HEK293T (cell line): ENCODE measurements at regions of chr16 and their contacts with region 1.

Region 1: GRCh38 chr16:71412270-71413160 is 29.3 kb downstream of the TLE7 start:
- DNase-seq: peak; percentile 84

Region 2: DNA sequence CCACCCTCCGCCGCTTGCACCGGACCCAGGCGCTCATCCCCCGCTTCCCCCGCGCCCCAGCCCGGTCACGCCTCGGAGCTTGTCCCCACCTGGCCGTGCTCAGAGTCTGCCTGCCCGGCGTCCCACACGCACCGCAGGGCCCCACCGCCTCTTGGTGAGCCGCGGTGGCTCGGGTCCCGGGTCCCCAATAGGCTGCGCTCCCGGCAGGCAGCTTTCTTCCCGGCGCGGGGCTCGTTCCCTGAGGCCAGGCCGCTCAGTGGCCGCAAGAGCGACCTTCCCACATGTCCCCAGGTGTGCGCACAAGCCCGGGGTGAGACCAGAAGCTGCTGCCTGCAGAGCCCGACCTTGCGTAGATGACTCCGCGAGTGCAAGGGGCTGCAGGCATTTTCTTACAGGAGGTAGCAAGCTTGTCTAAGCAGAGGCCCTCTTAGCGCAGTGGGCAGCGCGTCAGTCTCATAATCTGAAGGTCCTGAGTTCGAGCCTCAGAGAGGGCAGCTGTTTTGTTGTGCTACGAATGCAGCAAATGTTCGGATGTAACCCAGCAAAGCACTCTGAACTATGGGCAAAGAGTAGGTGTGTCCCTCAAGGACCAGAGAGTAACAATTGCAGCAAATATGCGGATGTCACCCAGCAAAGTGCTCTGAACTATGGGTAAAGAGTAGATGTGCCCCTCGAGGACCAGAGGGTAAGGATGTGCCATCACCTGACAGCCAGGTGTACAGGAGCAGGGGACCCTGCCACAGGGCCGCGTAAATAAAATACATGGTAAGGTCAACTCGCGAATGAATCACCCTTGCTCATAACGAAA is 13.8 kb after region 1 on chr16:
- CTCF ChIA-PET with region 1: interaction called, 13 read pairs
- POLR2A ChIA-PET with region 1: interaction called, 3 read pairs
- DNase-seq: peak; percentile 78

Region 3: DNA sequence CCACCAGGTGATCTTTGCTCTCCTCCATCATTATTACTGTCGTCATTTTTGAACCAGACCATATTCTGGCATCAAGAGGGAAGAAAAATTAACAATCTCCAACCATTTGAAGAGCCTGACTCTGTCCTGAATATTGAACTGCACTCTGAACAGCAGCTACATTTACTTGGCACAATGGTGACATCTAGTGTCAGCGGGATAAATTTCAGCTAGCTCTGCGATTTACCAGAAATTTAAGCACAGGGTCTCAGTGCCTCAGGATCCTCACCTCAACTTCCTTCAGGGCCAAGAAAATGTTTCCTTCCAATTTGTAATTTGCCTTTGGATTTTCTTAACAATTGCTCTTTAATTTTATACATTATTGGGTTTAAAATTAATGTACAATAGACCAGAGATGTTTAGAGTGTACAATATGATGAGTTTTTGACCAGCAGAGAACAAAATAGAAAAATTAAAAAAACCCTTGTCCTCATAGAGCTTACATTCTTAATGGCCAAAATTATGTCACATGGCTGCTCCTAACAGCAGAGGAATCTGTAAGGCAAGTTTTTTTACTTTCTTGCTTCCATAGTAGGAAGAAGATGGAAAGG is 87.4 kb after region 1 on chr16:
- CTCF ChIA-PET with region 1: interaction called, 15 read pairs
- POLR2A ChIA-PET with region 1: no interaction called
- DNase-seq: peak; percentile 70

Region 4: DNA sequence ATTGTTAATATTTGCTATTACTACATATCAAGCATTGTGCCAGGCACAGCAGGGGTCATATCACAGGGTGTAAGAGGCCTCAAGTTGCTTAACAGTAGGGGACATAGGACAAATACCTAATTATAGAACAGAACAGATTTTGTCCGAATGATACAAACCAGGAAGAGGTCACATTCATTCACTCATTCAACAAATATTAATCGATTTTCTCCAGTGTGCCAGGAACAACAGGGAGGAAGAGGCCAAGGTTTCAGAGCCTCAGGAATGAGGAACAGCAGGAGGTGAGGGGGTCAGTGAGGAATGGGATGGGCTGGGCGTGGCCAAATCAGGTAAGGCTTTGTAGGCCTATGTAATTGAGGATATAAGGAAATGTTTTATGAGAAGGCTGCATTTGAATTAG is 102.5 kb after region 1 on chr16:
- CTCF ChIA-PET with region 1: no interaction called
- POLR2A ChIA-PET with region 1: no interaction called
- DNase-seq: no peak